ENCODE measurements at regions of chr19 and their contacts with region 1.

Region 1: GRCh38 chr19:19385108-19385899 is 20.2 kb upstream of the GATAD2A start:
- DNase-seq: peak; percentile 100
- ATAC-seq: peak; percentile 96
- H3K4me3 Mint-ChIP-seq: peak overlapping the region; percentile 86
- H3K27ac Mint-ChIP-seq: peak overlapping the region; percentile 78
- H3K4me1 Mint-ChIP-seq: peaks cover 36% of the 10 kb centered on the region
- H3K27me3 Mint-ChIP-seq: no peaks in the 10 kb centered on the region

Region 2: DNA sequence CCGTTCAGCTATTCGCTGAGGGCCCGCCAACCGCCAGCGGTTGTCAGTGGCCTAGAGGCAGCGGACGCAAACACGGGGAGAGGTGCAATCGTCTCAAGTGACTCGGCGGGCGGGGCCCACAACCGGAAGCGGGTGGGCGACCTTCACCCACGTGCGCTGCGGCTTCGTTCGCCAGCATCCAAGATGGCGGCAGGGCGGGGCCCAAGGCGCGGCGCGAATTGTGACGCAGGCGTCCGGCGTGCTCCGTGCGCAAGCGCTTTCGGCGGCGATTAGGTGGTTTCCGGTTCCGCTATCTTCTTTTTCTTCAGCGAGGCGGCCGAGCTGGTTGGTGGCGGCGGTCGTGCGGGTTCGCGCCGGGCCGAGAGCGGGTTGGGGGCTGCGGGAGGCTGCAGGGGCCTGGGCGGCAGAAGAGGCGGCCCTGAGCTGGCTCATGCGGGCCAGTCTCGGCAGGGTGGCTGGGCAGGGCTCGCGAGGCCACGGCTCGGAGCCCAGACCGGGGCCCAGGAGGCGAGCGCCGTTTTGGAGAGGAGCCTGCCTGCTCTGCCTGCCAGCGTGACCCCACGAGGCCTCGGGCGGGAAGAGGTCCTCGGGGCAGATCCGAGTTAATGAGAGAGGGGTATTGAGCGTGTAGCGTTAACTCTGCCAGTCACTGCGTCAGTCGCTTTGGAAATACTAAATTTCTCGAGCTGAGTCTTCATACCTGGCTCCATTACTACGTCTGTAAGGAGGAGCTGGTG is 813.6 kb before region 1 on chr19 and contains the start of gene UBA52:
- CTCF ChIA-PET with region 1: no interaction called
- POLR2A ChIA-PET with region 1: no interaction called
- intact Hi-C with region 1: loop called in 1 of 2 experiments (anchors 5 kb)
- DNase-seq: peak; percentile 100
- ATAC-seq: peak; percentile 94
- H3K4me3 Mint-ChIP-seq: peak within 1 kb of the TSS; percentile 89
- H3K27ac Mint-ChIP-seq: peak within 1 kb of the TSS; percentile 95
- H3K4me1 Mint-ChIP-seq: peaks cover 27% of the 10 kb centered on the region
- H3K27me3 Mint-ChIP-seq: no peaks in the 10 kb centered on the region
- total RNA-seq, gene UBA52: 1,703 to 2,296 TPM

Region 3: DNA sequence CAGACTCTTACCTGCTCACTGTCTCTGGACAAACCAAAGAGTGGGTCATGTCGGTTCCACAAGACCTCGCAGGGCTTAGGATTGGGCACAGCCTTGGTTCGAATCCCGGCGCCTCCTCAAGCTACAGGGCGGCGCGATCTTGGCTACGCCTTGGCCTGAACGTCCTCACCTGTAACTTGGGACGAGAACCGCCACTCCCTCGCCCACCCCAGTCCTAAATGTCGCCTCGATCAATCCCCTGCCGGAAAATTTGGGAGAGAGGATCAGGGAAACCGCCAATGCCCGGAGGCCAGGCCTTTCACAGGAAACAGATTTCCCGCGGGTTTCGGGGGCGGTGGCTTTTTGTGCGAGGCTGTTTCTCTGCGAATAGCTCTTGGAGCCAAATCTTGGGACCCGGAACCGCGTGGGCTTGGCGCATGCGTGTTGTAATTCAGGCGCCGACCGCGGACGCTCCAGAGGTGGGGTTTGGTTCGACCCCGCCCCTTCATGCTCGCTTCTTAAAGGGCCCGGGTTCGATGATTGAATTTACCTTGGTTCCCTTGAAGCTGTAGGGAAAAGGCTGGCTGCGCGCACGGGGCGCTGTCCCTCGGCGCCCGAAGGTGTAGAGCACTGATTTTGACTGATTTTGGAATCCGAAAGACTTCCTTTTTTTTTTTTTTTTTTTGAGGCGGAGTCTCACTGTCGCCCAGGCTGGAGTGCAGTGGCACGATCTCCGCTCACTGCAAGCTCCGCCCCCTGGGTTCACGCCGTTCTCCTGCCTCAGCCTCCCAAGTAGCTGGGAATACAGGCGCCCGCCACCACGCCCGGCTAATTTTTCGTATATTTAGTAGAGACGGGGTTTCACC is 182.1 kb before region 1 on chr19 and contains the start of gene NR2C2AP:
- CTCF ChIA-PET with region 1: no interaction called
- POLR2A ChIA-PET with region 1: no interaction called
- intact Hi-C with region 1: loop called in 1 of 2 experiments (anchors 1 kb)
- DNase-seq: peak; percentile 96
- ATAC-seq: peak; percentile 95
- H3K4me3 Mint-ChIP-seq: peak within 1 kb of the TSS; percentile 90
- H3K27ac Mint-ChIP-seq: peak within 1 kb of the TSS; percentile 84
- H3K4me1 Mint-ChIP-seq: peaks cover 30% of the 10 kb centered on the region
- H3K27me3 Mint-ChIP-seq: no peaks in the 10 kb centered on the region
- total RNA-seq, gene NR2C2AP: 34.7 to 46.6 TPM

Region 4: GRCh38 chr19:19304186-19304965 is 80.9 kb before region 1 on chr19:
- CTCF ChIA-PET with region 1: no interaction called
- POLR2A ChIA-PET with region 1: no interaction called
- intact Hi-C with region 1: no loop called
- DNase-seq: no peak
- ATAC-seq: no peak
- H3K4me3 Mint-ChIP-seq: no peak overlapping the region
- H3K27ac Mint-ChIP-seq: no peak overlapping the region
- H3K4me1 Mint-ChIP-seq: no peaks in the 10 kb centered on the region
- H3K27me3 Mint-ChIP-seq: no peaks in the 10 kb centered on the region

Region 5: DNA sequence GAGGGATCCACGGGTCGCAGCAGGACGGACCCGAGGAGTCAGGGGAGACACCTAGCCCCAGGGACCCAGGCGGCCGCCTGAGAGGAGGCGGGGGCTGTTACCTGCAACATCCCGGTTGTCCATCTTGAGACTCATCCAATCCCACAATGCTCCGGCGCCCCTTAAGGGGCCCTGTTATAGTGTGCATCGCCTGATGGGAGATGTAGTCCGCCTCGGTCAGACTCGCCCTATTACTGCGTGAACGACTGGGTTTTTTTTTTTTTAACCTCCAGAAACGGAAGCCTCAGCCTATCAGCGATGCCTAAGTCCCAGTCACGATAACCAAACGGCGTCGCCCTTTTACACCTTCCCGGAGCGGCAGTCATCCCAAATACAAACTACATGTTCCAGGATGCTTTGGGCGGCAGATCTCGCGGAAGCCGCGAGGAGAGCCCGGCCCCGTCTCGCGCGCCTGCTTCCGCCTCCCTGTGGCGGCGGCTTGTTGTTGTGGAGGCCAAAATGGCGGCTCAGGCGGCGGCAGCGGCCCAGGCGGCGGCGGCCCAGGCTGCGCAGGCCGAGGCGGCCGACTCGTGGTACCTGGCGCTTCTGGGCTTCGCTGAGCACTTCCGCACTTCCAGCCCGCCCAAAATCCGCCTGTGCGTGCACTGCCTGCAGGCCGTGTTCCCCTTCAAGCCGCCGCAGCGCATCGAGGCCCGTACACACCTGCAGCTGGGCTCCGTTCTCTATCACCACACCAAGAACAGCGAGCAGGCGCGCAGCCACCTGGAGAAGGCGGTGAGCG is 64.8 kb before region 1 on chr19 and contains the starts of genes MAU2 and SUGP1:
- CTCF ChIA-PET with region 1: no interaction called
- POLR2A ChIA-PET with region 1: no interaction called
- intact Hi-C with region 1: loop called in 1 of 2 experiments (anchors 1 kb)
- DNase-seq: peak; percentile 96
- ATAC-seq: peak; percentile 93
- H3K4me3 Mint-ChIP-seq: peak within 1 kb of the TSS; percentile 93
- H3K27ac Mint-ChIP-seq: peak within 1 kb of the TSS; percentile 100
- H3K4me1 Mint-ChIP-seq: peaks cover 39% of the 10 kb centered on the region
- H3K27me3 Mint-ChIP-seq: no peaks in the 10 kb centered on the region
- total RNA-seq, gene MAU2: 33.3 to 45.7 TPM
- total RNA-seq, gene SUGP1: 49.4 to 62.0 TPM

Region 6: DNA sequence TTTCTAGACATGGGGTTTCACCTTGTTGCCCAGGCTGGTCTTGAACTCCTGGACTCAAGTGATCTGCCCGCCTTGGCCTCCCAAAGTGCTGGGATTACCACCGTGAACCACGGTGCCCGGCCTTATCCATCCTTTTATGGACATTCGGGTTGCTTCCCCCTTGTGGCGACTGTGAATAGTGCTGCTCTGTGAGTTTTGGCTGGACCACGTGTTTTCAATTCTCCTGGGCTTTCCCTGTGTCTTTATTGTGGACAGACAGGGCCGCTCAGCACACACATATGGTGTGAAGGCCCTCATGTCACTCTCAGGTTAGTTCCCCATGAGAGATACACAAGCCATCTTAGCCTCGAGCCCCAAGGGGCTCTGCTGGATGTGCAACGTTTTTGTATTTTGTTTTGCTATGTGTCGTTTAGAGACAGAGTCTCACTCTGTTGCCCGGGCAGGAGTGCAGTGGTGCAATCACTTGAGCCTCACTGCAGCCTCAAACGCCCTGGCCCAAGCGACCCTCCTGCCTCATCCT is 24.2 kb before region 1 on chr19:
- CTCF ChIA-PET with region 1: interaction called, 4 read pairs
- POLR2A ChIA-PET with region 1: interaction called, 4 read pairs
- intact Hi-C with region 1: loop called (anchors 1 kb)
- DNase-seq: peak; percentile 88
- ATAC-seq: peak; percentile 76
- H3K4me3 Mint-ChIP-seq: no peak overlapping the region
- H3K27ac Mint-ChIP-seq: peak overlapping the region; percentile 31
- H3K4me1 Mint-ChIP-seq: peaks cover 31% of the 10 kb centered on the region
- H3K27me3 Mint-ChIP-seq: no peaks in the 10 kb centered on the region

Region 7: GRCh38 chr19:19515764-19516519 is 130.6 kb after region 1 on chr19 and contains the start of gene NDUFA13:
- CTCF ChIA-PET with region 1: no interaction called
- POLR2A ChIA-PET with region 1: interaction called, 4 read pairs
- intact Hi-C with region 1: loop called in 1 of 2 experiments (anchors 1 kb)
- DNase-seq: peak; percentile 95
- ATAC-seq: peak; percentile 94
- H3K4me3 Mint-ChIP-seq: peak within 1 kb of the TSS; percentile 83
- H3K27ac Mint-ChIP-seq: peak within 1 kb of the TSS; percentile 92
- H3K4me1 Mint-ChIP-seq: peaks cover 25% of the 10 kb centered on the region
- H3K27me3 Mint-ChIP-seq: no peaks in the 10 kb centered on the region
- total RNA-seq, gene NDUFA13: 310 to 323 TPM